ENCODE measurements at regions of chr5 and their contacts with region 1.

Region 1: GRCh38 chr5:142864725-142865260 is 94.6 kb downstream of the ARHGAP26 start:
- DNase-seq: peak in 1 of 2 experiments; percentile 30
- H3K4me3 ChIP-seq: no peak overlapping the region
- H3K4me3 Mint-ChIP-seq: no peak overlapping the region
- H3K27ac Mint-ChIP-seq: peak overlapping the region; percentile 20
- H3K4me1 ChIP-seq: peaks cover 50% of the 10 kb centered on the region
- H3K4me1 Mint-ChIP-seq: peaks cover 39% of the 10 kb centered on the region
- H3K27me3 ChIP-seq: no peaks in the 10 kb centered on the region
- H3K27me3 Mint-ChIP-seq: no peaks in the 10 kb centered on the region
- CTCF ChIP-seq: no peak

Region 2: GRCh38 chr5:142845402-142845921 is 19.3 kb before region 1 on chr5:
- CTCF ChIA-PET with region 1: interaction called, 6 read pairs
- POLR2A ChIA-PET with region 1: no interaction called
- intact Hi-C with region 1: loop called (anchors 1 kb)
- DNase-seq: no peak
- H3K4me3 ChIP-seq: no peak overlapping the region
- H3K4me3 Mint-ChIP-seq: no peak overlapping the region
- H3K27ac Mint-ChIP-seq: peak overlapping the region; percentile 77
- H3K4me1 ChIP-seq: peaks cover 25% of the 10 kb centered on the region
- H3K4me1 Mint-ChIP-seq: peaks cover 48% of the 10 kb centered on the region
- H3K27me3 ChIP-seq: no peaks in the 10 kb centered on the region
- H3K27me3 Mint-ChIP-seq: no peaks in the 10 kb centered on the region
- CTCF ChIP-seq: no peak

Region 3: DNA sequence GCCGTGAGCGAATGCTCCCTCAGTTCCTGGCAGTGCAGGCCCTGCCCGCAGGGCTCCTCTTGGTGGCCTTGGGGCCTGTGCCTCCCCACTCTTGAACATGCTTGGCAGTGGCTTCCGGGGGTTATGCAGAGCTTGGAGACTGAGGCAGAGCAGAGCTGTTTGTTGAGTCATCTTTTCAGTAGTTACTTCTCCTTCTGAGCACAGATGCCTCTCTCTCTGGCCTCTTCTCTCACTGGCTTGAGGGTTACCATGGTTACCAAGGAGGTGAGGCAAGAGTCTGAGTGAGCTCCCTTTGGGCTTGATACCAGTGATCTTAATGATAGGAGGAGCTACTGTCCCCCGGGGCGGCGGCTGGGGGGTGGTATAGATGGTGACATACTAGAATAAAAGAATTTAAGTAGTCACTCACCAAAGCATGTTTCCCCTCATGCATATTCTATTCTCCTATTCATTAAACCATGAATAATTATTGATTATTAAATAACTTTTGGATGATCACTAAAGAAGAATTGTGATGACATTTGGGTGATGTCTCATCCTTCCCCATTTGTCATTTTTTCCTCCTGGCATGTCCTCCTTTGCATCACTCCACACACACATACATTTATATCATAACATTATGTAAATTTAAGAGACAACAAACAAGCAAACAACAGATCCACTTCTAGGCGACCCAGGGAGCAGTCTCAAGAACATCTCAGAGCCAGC is 16.4 kb after region 1 on chr5:
- CTCF ChIA-PET with region 1: interaction called, 4 read pairs
- POLR2A ChIA-PET with region 1: no interaction called
- intact Hi-C with region 1: loop called (anchors 2 kb)
- DNase-seq: no peak
- H3K4me3 ChIP-seq: no peak overlapping the region
- H3K4me3 Mint-ChIP-seq: no peak overlapping the region
- H3K27ac Mint-ChIP-seq: no peak overlapping the region
- H3K4me1 ChIP-seq: peaks cover 17% of the 10 kb centered on the region
- H3K4me1 Mint-ChIP-seq: peaks cover 15% of the 10 kb centered on the region
- H3K27me3 ChIP-seq: no peaks in the 10 kb centered on the region
- H3K27me3 Mint-ChIP-seq: no peaks in the 10 kb centered on the region
- CTCF ChIP-seq: no peak

Measured in Caco-2 (cell line).